ENCODE measurements at regions of chr2 and their contacts with region 1.

Region 1: GRCh38 chr2:69306822-69307578 is 80.0 kb downstream of the GFPT1 start:
- DNase-seq: peak; percentile 70
- ATAC-seq: peak; percentile 92
- H3K4me3 Mint-ChIP-seq: peak overlapping the region; percentile 81
- H3K27ac Mint-ChIP-seq: no peak overlapping the region
- H3K4me1 Mint-ChIP-seq: peaks cover 33% of the 10 kb centered on the region
- H3K27me3 Mint-ChIP-seq: peaks cover 26% of the 10 kb centered on the region
- CTCF ChIP-seq: no peak

Region 2: GRCh38 chr2:68943581-68944568 is 363.1 kb before region 1 on chr2:
- CTCF ChIA-PET with region 1: no interaction called
- POLR2A ChIA-PET with region 1: no interaction called
- intact Hi-C with region 1: loop called (anchors 1 kb)
- DNase-seq: peak; percentile 28
- ATAC-seq: peak; percentile 68
- H3K4me3 Mint-ChIP-seq: no peak overlapping the region
- H3K27ac Mint-ChIP-seq: no peak overlapping the region
- H3K4me1 Mint-ChIP-seq: no peaks in the 10 kb centered on the region
- H3K27me3 Mint-ChIP-seq: peaks cover 44% of the 10 kb centered on the region
- CTCF ChIP-seq: no peak

Region 3: DNA sequence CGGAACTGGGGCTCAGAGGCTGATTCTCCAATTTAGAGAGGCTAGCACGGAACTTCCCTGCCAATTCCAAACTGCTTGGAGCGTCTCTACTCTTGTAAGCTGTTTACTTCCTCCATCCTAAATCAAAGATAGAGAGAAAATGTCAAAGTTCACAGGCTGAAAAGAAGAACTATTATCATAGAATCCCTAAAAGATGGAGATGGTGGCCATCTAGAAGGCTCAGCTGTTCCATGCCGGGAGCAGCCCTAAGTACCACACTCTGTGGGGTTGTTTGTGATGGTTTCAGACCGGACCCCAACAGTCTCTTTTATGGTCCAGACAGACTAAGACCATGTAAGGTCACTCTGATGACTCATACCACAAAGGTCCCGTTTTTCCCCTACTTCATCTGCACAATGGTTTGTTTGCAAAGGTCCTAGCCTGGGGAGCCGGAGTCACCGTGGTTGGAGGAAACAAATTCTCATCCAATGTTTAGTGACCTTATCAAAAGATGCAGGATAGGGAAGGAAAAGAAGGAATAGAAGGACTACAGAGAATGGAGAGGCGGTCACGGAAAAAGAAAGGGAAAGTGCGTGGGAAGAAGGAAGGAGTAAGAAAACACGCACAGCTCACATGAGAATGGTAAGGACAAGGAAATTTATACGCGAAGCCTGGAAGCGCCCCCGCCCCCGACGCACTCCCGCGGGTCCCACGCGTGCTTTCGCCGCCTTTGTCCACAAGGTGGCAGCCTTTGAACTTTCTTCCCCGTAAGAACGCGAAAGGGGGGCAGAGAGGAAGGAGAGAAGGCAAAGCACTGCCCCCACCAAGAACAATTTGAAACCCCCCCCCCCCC is 294.5 kb before region 1 on chr2:
- CTCF ChIA-PET with region 1: no interaction called
- POLR2A ChIA-PET with region 1: no interaction called
- intact Hi-C with region 1: loop called (anchors 1 kb)
- DNase-seq: peak; percentile 33
- ATAC-seq: peak; percentile 58
- H3K4me3 Mint-ChIP-seq: peak overlapping the region; percentile 64
- H3K27ac Mint-ChIP-seq: no peak overlapping the region
- H3K4me1 Mint-ChIP-seq: peaks cover 14% of the 10 kb centered on the region
- H3K27me3 Mint-ChIP-seq: peaks cover 55% of the 10 kb centered on the region
- CTCF ChIP-seq: no peak

Measured in activated B cell treated with CpG ODN at 0.5 μM for 24 hours (primary cell).